ENCODE measurements at regions of chr1 and their contacts with region 1.

Region 1: GRCh38 chr1:11907275-11908094 is 18.7 kb downstream of the KIAA2013 start:
- DNase-seq: peak; percentile 91
- CTCF ChIP-seq: peak; percentile 95

Region 2: DNA sequence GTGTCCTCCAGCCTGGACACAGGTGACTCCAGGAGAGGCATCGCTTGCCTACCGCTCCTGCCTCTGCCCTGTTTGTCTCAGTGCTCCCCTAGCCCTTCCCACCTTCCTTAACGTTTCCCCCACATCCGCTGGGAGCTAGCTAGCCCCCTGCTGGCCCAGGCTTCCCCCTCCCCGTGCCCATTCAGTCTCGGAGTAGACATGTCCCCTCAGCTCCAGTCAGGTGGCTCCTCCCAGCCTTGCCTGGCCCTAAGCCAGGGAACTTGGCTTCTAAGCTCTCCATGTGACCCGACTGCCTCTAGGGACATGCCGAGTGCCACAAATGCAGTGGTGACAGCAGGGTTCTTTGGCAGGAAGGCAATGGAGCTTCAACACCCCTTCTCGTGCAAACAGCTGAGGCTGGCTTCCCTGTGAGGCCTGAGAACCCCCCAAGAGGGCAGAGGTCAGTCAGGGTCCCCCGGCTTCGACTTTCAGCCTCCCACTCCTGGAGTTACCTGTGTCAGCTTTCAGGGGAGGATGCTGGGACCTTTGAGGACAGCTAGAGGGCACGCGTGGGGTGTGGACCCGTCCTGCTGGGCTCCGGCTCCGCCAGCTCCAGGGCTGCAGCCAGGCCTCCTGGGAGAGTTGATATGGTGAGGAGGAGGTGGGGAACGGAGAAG is 199.7 kb before region 1 on chr1:
- in situ Hi-C with region 1: no loop called
- DNase-seq: no peak
- CTCF ChIP-seq: no peak

Region 3: GRCh38 chr1:11842154-11843041 is 65.1 kb before region 1 on chr1:
- in situ Hi-C with region 1: loop called (anchors 10 kb)
- DNase-seq: peak; percentile 63
- CTCF ChIP-seq: no peak

Measured in GM13976 (cell line).